CD8-positive, alpha-beta T cell (primary cell): ENCODE measurements at regions of chr1 and their contacts with region 1.

Region 1: DNA sequence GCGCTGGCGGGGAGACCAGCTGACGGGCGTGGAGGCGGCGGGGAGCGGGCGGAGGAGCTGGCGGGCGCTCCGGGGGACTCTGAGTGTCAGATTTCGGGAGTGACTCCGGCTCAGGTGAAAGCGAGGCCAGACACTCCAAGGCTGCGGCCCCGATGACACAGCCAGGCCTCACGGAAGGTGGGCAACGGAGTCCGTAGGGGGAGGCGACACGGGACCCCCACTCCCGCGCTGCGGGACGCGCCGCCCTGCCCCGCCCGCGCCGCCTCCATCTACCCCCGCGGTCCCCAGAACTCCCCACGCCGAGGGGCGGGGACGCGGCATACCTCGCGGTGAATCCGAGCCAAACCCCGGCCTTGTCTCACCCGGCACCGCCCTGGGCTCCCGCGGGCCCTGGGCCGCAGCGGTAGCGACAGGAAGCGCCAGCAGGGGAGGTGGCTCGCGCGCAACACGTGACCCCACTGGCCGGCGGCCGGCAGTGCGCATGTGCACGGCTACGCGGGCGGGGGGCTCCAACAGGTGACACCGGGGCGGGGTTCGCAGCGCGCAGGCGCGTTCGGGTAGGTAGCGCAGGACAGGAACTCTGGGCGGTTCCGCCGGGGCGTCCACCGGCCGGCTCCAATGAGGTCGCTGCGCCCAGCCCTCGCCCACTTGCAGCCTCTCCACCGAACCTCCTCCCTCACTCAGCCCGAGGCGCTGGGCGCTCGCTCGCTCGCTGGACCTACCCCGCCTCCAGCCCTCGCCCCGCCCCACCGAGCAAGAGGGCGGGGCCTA is at the start of gene CC2D1B:
- DNase-seq: peak; percentile 98 to 100 (median 99)
- ATAC-seq: peak; percentile 79
- H3K4me3 ChIP-seq: peak within 1 kb of the TSS; percentile 82 to 89
- H3K4me3 Mint-ChIP-seq: peak within 1 kb of the TSS; percentile 90
- H3K27ac ChIP-seq: peak within 1 kb of the TSS; percentile 88 to 89
- H3K27ac Mint-ChIP-seq: peak within 1 kb of the TSS; percentile 94
- H3K4me1 ChIP-seq: peaks cover 41% of the 10 kb centered on the region
- H3K4me1 Mint-ChIP-seq: peaks cover 41% of the 10 kb centered on the region
- H3K27me3 ChIP-seq: no peaks in the 10 kb centered on the region
- H3K27me3 Mint-ChIP-seq: no peaks in the 10 kb centered on the region
- CTCF ChIP-seq: no peak
- total RNA-seq, gene CC2D1B: 38.8 to 40.6 TPM

Region 2: DNA sequence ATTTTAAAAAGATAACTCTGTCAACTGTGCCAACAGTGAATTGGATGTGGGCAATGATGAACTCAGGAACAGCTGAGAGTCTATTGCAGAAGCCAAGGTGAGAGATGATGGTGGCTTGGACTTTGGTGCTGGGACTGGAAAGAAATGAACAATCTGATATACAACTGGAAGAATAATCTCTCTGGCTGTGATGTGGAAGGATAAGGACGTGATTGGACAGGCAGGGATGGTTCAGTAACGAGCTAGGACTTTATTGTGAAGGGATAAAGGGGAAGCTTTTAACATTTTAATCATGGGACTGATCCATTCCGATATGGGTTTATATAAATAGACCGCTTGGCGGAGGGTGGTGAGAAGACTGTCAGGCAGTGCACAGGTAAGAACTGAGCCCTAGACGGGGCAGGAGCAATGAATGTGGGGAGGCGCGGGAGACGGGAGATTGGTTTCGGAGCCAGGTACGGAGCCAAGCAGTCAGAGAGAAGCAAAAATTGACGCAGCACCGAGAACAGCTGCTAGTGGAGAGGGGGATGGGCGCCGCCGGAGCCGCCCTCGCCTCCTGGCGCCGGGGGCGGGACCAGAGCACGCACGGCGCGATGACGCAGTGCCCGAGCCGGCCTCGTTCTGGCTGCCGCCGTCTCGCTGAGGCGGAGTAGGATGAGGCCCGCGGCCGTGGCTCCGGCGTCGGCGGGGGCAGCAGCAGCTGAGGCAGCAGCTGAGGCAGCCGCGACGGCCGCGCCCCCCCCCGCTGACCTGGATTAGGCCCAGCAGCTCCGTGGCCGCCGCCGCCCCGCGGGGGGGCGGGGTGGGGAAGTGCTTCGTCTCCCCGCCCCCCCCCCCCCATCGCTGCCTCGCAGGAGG is 1130.0 kb before region 1 on chr1 and contains the start of gene RNF11:
- CTCF ChIA-PET with region 1: no interaction called
- POLR2A ChIA-PET with region 1: no interaction called
- intact Hi-C with region 1: loop called in 1 of 2 experiments (anchors 5 kb)
- DNase-seq: peak; percentile 86 to 97 (median 91)
- ATAC-seq: peak; percentile 92
- H3K4me3 ChIP-seq: peak within 1 kb of the TSS; percentile 79 to 90
- H3K4me3 Mint-ChIP-seq: peak within 1 kb of the TSS; percentile 98
- H3K27ac ChIP-seq: peak within 1 kb of the TSS; percentile 80 to 92
- H3K27ac Mint-ChIP-seq: peak within 1 kb of the TSS; percentile 99
- H3K4me1 ChIP-seq: peaks cover 37% of the 10 kb centered on the region
- H3K4me1 Mint-ChIP-seq: peaks cover 33% of the 10 kb centered on the region
- H3K27me3 ChIP-seq: no peaks in the 10 kb centered on the region
- H3K27me3 Mint-ChIP-seq: no peaks in the 10 kb centered on the region
- CTCF ChIP-seq: no peak
- total RNA-seq, gene RNF11: 95.9 to 103 TPM

Region 3: GRCh38 chr1:52141513-52142219 is 224.3 kb before region 1 on chr1 and contains the start of gene ZFYVE9:
- CTCF ChIA-PET with region 1: interaction called, 3 read pairs
- POLR2A ChIA-PET with region 1: interaction called, 3 read pairs
- intact Hi-C with region 1: loop called (anchors 5 kb)
- DNase-seq: peak; percentile 41 to 87 (median 71)
- ATAC-seq: peak; percentile 78
- H3K4me3 ChIP-seq: peak within 1 kb of the TSS; percentile 52 to 66
- H3K4me3 Mint-ChIP-seq: peak within 1 kb of the TSS; percentile 92
- H3K27ac ChIP-seq: peak within 1 kb of the TSS; percentile 33 to 49
- H3K27ac Mint-ChIP-seq: peak within 1 kb of the TSS; percentile 91
- H3K4me1 ChIP-seq: peaks cover 21% of the 10 kb centered on the region
- H3K4me1 Mint-ChIP-seq: peaks cover 41% of the 10 kb centered on the region
- H3K27me3 ChIP-seq: peaks cover 0 to 3% of the 10 kb centered on the region in 2 experiments
- H3K27me3 Mint-ChIP-seq: no peaks in the 10 kb centered on the region
- CTCF ChIP-seq: peak; percentile 59
- total RNA-seq, gene ZFYVE9: 5.9 to 6.3 TPM

Region 4: DNA sequence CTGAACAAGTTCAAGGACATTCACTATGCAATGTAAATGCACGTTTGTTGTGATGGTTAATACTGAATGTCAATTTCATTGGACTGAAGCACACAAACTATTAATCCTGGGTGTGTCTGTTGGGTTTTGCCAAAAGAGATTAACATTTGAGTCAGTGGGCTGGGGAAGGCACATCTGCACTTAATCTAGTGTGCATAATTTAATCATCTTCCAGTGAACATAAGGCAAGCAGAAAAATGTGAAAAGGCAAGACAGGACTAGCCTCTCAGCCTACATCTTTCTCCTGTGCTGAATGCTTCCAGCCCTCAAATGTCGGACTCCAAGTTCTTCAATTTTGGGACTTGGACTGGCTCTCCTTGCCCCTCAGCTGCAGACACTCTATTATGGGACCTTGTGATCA is 78.5 kb after region 1 on chr1:
- CTCF ChIA-PET with region 1: no interaction called
- POLR2A ChIA-PET with region 1: no interaction called
- intact Hi-C with region 1: no loop called
- DNase-seq: no peak
- ATAC-seq: no peak
- H3K4me3 ChIP-seq: no peak overlapping the region
- H3K4me3 Mint-ChIP-seq: no peak overlapping the region
- H3K27ac ChIP-seq: no peak overlapping the region
- H3K27ac Mint-ChIP-seq: no peak overlapping the region
- H3K4me1 ChIP-seq: no peaks in the 10 kb centered on the region
- H3K4me1 Mint-ChIP-seq: no peaks in the 10 kb centered on the region
- H3K27me3 ChIP-seq: no peaks in the 10 kb centered on the region
- H3K27me3 Mint-ChIP-seq: no peaks in the 10 kb centered on the region
- CTCF ChIP-seq: no peak

Region 5: GRCh38 chr1:52552505-52553361 is 186.8 kb after region 1 on chr1 and contains the start of gene TUT4:
- CTCF ChIA-PET with region 1: no interaction called
- POLR2A ChIA-PET with region 1: no interaction called
- intact Hi-C with region 1: loop called (anchors 1 to 5 kb)
- DNase-seq: peak; percentile 55 to 87 (median 73)
- ATAC-seq: peak; percentile 56
- H3K4me3 ChIP-seq: peak within 1 kb of the TSS; percentile 87 to 96
- H3K4me3 Mint-ChIP-seq: peak within 1 kb of the TSS; percentile 70
- H3K27ac ChIP-seq: peak within 1 kb of the TSS; percentile 92 to 96
- H3K27ac Mint-ChIP-seq: peak within 1 kb of the TSS; percentile 69
- H3K4me1 ChIP-seq: peaks cover 35% of the 10 kb centered on the region
- H3K4me1 Mint-ChIP-seq: peaks cover 40% of the 10 kb centered on the region
- H3K27me3 ChIP-seq: no peaks in the 10 kb centered on the region
- H3K27me3 Mint-ChIP-seq: no peaks in the 10 kb centered on the region
- CTCF ChIP-seq: peak; percentile 8
- total RNA-seq, gene TUT4: 133 to 134 TPM

Region 6: GRCh38 chr1:52702886-52703787 is 337.2 kb after region 1 on chr1:
- CTCF ChIA-PET with region 1: no interaction called
- POLR2A ChIA-PET with region 1: interaction called, 3 read pairs
- intact Hi-C with region 1: loop called in 1 of 2 experiments (anchors 2 kb)
- DNase-seq: peak; percentile 61 to 92 (median 78)
- ATAC-seq: peak; percentile 93
- H3K4me3 ChIP-seq: peak overlapping the region; percentile 54 to 59
- H3K4me3 Mint-ChIP-seq: peak overlapping the region; percentile 89
- H3K27ac ChIP-seq: peak overlapping the region; percentile 80 to 87
- H3K27ac Mint-ChIP-seq: peak overlapping the region; percentile 98
- H3K4me1 ChIP-seq: peaks cover 11% of the 10 kb centered on the region
- H3K4me1 Mint-ChIP-seq: peaks cover 19% of the 10 kb centered on the region
- H3K27me3 ChIP-seq: no peaks in the 10 kb centered on the region
- H3K27me3 Mint-ChIP-seq: peaks cover under 1% of the 10 kb centered on the region
- CTCF ChIP-seq: no peak

Region 7: DNA sequence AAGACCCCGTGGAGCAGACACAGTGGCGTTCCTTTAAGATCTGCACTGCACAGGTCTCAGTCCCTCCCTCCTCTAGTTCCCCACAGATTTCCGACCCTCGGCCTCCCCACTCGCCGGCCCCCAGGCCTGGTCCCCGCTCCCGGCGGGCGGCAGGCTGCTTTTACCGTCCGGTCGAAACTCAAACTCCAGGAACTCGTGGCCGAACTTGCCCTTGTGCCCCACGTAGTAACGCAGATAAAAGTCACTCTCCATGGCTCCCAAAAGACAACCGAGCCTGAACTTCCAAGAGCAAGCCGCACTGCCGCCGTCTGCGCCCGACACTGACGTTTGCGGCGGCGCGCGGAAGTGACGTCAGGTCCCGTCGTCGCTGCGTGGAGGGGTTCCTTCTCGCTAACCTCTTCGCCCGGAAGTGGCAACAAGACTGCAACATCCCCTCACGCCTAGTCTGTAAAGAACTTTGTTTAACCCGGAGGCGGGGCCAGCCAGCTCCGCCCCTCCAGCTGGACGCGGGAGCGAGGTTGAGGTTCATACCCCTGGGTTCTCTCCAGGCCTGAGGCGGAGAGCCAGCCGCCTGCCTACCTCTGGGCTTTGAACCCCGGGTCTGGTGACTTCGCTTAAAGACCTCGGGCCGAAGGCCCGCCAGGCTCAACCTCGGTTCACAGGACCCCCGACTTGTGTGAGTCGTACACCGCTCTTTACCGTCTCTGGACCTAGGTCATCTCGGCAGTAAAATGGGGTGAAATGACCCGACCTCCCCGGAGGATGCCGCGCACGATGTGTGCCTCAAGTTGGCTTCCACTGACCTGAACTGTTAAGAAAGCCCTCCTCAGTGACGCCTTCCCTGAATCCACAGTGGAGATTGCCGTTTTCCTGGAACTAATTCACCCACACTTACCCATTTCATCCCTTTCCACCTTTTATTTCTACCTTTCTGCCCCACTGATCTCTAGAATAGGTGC is 872.5 kb after region 1 on chr1 and contains the start of gene MAGOH:
- CTCF ChIA-PET with region 1: no interaction called
- POLR2A ChIA-PET with region 1: no interaction called
- intact Hi-C with region 1: loop called in 1 of 2 experiments (anchors 10 kb)
- DNase-seq: peak; percentile 87 to 97 (median 95)
- ATAC-seq: peak; percentile 97
- H3K4me3 ChIP-seq: peak within 1 kb of the TSS; percentile 94 to 100
- H3K4me3 Mint-ChIP-seq: peak within 1 kb of the TSS; percentile 97
- H3K27ac ChIP-seq: peak within 1 kb of the TSS; percentile 89 to 95
- H3K27ac Mint-ChIP-seq: peak within 1 kb of the TSS; percentile 96
- H3K4me1 ChIP-seq: peaks cover 17% of the 10 kb centered on the region
- H3K4me1 Mint-ChIP-seq: peaks cover 33% of the 10 kb centered on the region
- H3K27me3 ChIP-seq: no peaks in the 10 kb centered on the region
- H3K27me3 Mint-ChIP-seq: no peaks in the 10 kb centered on the region
- CTCF ChIP-seq: no peak
- total RNA-seq, gene MAGOH: 77.2 to 79.5 TPM